Sigmoid colon (tissue), 7 donors: ENCODE measurements at regions of chr12 and their contacts with region 1.

Region 1: DNA sequence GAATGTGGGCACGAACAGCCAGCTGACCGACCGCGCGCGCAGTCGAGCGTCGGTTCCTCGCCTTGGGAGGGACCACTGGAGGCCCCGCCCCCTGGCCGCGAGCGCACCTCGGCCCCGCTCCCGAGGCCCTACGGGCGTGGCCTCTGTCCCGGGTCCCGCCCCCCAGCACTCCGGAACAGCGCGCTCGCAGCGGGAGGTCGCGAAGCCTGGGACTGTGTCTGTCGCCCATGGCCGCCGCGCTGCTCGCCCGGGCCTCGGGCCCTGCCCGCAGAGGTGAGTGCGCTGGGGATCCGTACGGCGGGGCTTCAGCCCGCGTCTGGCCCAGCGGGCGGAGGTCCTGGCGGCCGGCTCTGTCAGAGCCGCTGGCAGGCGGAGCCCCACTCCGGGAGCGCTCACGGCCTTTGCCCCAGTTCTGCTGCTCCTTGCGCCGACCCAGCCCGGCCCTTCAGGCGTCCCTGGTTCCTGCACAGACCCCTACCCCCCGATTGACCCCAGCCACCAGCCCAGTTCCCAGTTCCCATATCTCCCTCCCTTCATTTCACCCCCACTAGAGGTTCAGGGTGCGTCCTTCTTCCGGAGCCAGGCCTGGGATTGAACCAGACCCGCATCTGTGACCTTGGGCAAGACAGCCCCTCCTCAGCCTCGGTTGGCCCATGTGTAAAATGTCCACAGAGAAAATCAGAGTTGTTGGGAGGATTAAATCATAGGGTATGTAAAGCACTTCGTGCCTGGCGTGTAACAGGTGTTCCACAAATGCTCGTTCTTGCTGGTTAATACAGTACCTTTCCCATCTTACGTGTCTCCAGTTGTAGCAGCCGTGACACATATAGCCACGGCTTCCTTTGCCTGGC is at the start of gene ACADS:
- DNase-seq: peak; percentile 95
- H3K4me3 ChIP-seq: peak within 1 kb of the TSS; percentile 53 to 82 (median 72)
- H3K27ac ChIP-seq: peak within 1 kb of the TSS; percentile 81 to 86 (median 85)
- H3K4me1 ChIP-seq: peaks cover 0 to 21% (median 20%) of the 10 kb centered on the region in 4 donors
- H3K27me3 ChIP-seq: no peaks in the 10 kb centered on the region
- CTCF ChIP-seq: peak in 1 of 4 experiments; percentile 8
- EP300 ChIP-seq: no peak
- POLR2A ChIP-seq: peak; percentile 26 to 28
- total RNA-seq, gene ACADS: 36.8 to 40.3 (median 39.1) TPM

Region 2: GRCh38 chr12:120686690-120687577 is 39.0 kb before region 1 on chr12 and contains the start of gene MLEC:
- intact Hi-C with region 1: loop called (anchors 5 kb)
- DNase-seq: peak; percentile 99
- H3K4me3 ChIP-seq: peak within 1 kb of the TSS; percentile 77 to 100 (median 89)
- H3K27ac ChIP-seq: peak within 1 kb of the TSS; percentile 92 to 97 (median 94)
- H3K4me1 ChIP-seq: peaks cover 0 to 52% (median 40%) of the 10 kb centered on the region in 4 donors
- H3K27me3 ChIP-seq: no peaks in the 10 kb centered on the region
- CTCF ChIP-seq: no peak
- EP300 ChIP-seq: no peak
- POLR2A ChIP-seq: peak; percentile 58 to 81
- total RNA-seq, gene MLEC: 30.3 to 40.3 (median 33.6) TPM

Region 3: GRCh38 chr12:121132601-121133481 is 407.0 kb after region 1 on chr12 and contains the start of gene P2RX7:
- intact Hi-C with region 1: loop called (anchors 10 kb)
- DNase-seq: peak; percentile 91
- H3K4me3 ChIP-seq: peak within 1 kb of the TSS; percentile 38 to 61 (median 52)
- H3K27ac ChIP-seq: peak within 1 kb of the TSS; percentile 74 to 87 (median 79)
- H3K4me1 ChIP-seq: peaks cover 0 to 38% (median 28%) of the 10 kb centered on the region in 4 donors
- H3K27me3 ChIP-seq: no peaks in the 10 kb centered on the region
- CTCF ChIP-seq: no peak
- EP300 ChIP-seq: no peak
- POLR2A ChIP-seq: no peak
- total RNA-seq, gene P2RX7: 3.9 to 8.0 (median 5.0) TPM